Heart left ventricle (tissue), 16 donors: ENCODE measurements at regions of chr17 and their contacts with region 1.

Region 1: DNA sequence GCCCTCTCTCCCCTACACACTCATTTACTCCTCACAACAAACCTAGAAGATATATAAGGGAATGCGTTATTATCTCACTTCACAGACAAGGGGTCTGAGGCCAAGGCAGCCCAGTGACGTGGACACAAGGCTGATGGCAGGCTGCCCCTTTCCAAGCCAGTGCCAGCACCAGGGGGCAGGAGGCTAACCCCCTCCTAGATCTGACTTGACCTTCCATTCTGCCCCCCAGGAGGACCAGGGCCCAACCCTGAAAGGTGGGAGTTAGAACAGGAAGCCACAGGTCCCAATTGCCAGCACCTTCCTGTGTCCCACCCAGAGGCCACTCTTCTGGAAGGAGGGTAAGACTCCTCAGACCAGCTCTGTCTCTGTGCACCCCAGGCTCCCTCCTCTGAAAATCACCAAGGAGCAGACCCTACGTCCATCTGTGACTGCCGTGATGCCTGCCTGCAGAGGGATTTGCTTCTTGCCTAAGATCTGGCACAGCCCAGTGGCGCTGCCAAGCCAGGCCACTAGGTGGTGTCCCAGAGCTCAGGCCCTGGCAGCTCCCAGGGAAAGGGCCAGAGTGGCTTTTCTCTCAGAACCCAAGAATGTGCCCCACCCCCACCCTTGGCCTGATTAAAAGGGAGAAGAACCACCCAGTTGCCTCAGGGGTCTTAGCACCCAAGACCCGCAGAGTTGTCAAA is 42.4 kb upstream of the MRPS23 start:
- DNase-seq: peak; percentile 87 to 93 (median 91)
- ATAC-seq: peak; percentile 46 to 65 (median 47)
- H3K4me3 ChIP-seq: peak overlapping the region in 6 of 12 donors; percentile 48 to 56 (median 51)
- H3K27ac ChIP-seq: peak overlapping the region; percentile 92 to 100 (median 97)
- H3K4me1 ChIP-seq: peaks cover 6 to 90% (median 77%) of the 10 kb centered on the region in 12 donors
- H3K27me3 ChIP-seq: no peaks in the 10 kb centered on the region
- CTCF ChIP-seq: peak; percentile 95 to 100 (median 98)
- POLR2A ChIP-seq: no peak

Region 2: DNA sequence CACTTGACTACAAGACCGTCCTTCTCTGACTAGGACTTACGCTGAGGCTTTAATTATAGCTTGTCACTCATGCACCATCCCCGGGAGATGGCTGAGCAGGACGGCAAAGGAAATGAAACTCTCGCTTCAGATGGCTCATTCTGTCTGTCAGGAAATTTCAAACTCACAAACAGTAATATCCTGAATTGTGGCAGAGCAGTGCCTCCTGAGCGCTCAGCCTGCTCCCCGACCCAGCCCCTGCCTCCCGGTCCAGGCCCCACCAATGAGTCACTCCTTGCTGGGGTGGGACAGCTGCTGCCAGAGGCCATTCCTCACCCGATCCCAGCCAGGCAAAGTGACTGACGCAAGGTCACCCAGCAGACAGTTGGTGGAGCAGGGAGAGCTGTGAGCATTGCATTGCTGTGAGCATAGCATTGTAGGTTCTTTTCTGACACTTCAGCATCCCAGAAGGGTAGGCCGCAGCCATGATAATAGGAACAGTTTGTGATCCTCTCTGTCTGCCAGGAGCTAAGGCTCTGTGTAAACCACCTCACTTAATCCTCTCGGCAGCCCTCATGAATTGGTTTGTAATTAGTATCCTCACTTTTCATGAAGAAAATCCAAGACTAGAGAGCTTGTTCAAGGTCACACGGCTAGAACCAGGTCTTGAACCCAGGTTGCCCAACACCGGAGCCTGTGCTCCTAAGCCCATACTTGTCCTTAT is 168.1 kb before region 1 on chr17:
- intact Hi-C with region 1: no loop called
- DNase-seq: no peak
- ATAC-seq: no peak
- H3K4me3 ChIP-seq: no peak overlapping the region
- H3K27ac ChIP-seq: no peak overlapping the region
- H3K4me1 ChIP-seq: no peaks in the 10 kb centered on the region
- H3K27me3 ChIP-seq: no peaks in the 10 kb centered on the region
- CTCF ChIP-seq: no peak
- POLR2A ChIP-seq: no peak

Region 3: DNA sequence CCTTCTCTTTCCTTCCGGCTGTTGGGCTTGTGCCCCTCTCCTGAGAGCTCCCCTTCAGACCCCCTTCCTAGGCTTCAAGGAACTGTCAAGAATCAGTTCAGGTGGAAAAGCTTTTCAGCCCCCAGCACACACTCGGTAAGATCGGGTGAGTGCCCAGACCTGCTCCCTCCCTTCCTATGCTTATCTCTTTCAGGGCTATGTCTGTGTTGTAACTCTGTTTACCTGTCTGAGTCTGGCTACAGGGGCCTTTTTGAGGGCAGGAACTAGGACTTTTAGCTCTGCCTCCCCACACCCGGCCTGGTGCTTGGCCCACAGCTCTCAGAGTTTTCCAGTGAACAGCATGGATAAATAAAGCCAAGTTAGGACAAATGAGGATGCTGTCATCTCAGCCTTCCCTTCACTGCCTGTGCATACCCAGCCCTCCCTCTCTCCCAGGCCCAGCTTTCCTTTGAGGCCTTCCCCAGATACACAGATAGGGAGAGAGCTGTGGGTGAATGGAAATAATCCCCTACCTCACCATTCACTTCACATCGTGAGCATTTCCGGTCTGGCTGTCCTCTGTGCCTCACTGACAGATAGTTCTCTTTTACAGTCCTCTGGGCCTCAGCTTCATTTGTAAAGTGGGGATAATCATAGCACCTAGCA is 36.8 kb before region 1 on chr17:
- intact Hi-C with region 1: loop called in 7 of 10 experiments (anchors 1 to 5 kb)
- DNase-seq: no peak
- ATAC-seq: no peak
- H3K4me3 ChIP-seq: no peak overlapping the region
- H3K27ac ChIP-seq: peak overlapping the region in 7 of 12 donors; percentile 32 to 97 (median 92)
- H3K4me1 ChIP-seq: peaks cover 0 to 57% (median 34%) of the 10 kb centered on the region in 12 donors
- H3K27me3 ChIP-seq: no peaks in the 10 kb centered on the region
- CTCF ChIP-seq: no peak
- POLR2A ChIP-seq: no peak

Region 4: DNA sequence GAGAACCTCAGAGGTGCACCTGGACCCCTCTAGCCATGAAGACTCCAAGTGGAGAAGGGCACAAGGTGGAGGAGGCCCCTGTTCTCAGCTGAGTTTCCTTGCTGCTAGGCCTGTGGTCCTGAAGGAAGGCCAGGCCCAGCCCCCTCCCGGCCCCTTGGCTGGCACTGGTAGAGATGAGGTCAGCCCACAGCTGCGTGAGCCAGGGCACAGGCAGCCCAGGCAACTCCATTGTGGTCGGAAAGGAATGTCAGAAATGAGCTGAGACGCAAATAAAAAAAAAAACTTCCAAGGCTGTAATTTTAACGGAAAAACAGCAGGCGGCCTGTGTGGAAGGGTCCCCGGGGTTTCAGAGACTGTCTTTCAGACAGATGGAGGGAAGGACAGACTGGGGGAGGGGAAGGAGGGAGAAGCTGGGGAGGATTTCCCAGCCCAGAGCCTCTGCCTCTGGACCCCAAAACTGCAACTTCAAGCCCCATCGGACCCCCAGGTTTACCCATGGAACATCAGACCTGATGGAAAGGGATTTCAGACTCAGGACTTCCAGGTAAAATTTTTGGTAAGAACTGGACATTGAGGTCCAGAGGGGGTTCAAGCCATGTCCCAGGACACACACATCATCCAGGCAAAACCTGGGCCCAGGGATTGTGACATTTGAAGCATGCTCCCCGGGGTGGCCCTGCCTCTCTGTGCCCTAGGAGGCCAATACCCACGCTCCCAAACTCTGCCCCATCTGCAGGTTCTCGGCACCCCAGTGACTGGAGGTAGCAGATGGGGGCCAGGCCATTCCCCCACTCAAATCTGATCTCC is 16.8 kb before region 1 on chr17:
- intact Hi-C with region 1: loop called in 2 of 10 experiments (anchors 1 to 2 kb)
- DNase-seq: peak; percentile 84 to 89 (median 87)
- ATAC-seq: peak; percentile 82 to 90 (median 88)
- H3K4me3 ChIP-seq: peak overlapping the region in 5 of 12 donors; percentile 6 to 39 (median 29)
- H3K27ac ChIP-seq: peak overlapping the region; percentile 56 to 93 (median 86)
- H3K4me1 ChIP-seq: peaks cover 15 to 78% (median 54%) of the 10 kb centered on the region in 12 donors
- H3K27me3 ChIP-seq: no peaks in the 10 kb centered on the region
- CTCF ChIP-seq: peak; percentile 12 to 58 (median 40)
- POLR2A ChIP-seq: no peak

Region 5: DNA sequence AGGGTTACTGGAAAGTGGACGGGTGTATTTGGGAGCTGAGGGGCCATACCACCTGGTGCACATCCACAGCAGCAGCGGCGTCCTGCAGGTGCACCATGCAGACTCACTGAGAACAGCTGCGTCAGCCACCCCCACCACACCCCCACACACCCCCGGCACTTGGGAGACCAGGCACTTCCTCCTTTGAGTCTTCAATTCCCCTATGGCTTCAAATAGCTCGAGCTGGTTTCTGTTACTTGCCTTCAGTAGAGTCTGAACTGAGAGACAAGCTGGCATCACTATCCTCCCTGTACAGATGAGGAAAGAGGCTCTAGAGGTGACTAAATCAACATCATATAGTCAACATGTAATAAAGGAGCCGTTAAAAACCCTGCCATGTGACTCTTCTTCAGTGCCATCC is 47.5 kb after region 1 on chr17:
- intact Hi-C with region 1: loop called in 1 of 10 experiments (anchors 5 kb)
- DNase-seq: peak in 2 of 5 donors; percentile 47 to 64
- ATAC-seq: peak in 1 of 4 donors; percentile 5
- H3K4me3 ChIP-seq: no peak overlapping the region
- H3K27ac ChIP-seq: peak overlapping the region in 11 of 12 donors; percentile 44 to 100 (median 70)
- H3K4me1 ChIP-seq: peaks cover 34 to 99% (median 89%) of the 10 kb centered on the region in 12 donors
- H3K27me3 ChIP-seq: no peaks in the 10 kb centered on the region
- CTCF ChIP-seq: no peak
- POLR2A ChIP-seq: no peak

Region 6: DNA sequence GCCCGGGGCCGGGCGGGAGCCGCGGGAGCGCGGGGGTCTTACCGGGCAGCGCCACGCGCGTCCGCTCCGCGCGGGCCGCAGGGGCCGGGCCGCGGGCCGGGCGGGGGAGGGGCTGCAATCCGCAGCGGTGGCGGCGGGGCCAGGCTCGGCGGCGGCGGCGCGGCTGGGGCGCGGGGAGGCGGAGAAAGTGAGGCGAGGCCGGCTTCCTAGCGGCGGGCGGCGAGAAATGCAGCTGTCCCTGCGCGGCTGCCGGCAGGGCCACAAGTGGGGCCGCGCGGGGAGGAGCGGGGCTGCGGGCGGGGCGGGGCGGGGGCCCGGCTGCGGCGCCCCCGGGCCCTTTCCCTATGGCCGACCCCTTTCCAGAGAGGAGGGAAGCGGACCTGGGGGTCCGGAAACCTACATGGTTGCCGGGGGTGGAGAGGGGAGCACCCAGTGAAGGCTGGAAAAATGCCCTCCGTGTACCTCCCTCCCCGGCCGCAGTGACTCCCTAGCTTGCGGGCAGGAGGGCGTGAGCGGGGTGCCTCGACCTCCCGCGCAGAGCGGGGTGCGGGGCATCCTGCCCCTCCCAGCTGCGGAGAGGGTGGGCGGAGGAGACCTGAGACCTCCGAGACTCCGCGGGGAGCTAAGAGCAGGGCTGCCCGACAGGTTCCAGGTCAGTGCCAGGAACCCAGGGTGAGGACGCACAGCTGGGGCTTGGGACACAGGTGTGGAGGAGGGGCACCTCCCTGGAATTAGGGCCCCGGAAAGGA is 63.1 kb after region 1 on chr17 and contains the start of gene CUEDC1:
- intact Hi-C with region 1: loop called in 9 of 10 experiments (anchors 1 to 5 kb)
- DNase-seq: peak; percentile 87 to 94 (median 89)
- ATAC-seq: peak; percentile 12 to 78 (median 72)
- H3K4me3 ChIP-seq: peak within 1 kb of the TSS; percentile 64 to 99 (median 92)
- H3K27ac ChIP-seq: peak within 1 kb of the TSS; percentile 94 to 100 (median 100)
- H3K4me1 ChIP-seq: peaks cover 0 to 58% (median 43%) of the 10 kb centered on the region in 12 donors
- H3K27me3 ChIP-seq: peaks cover 0 to 4% (median 0%) of the 10 kb centered on the region in 9 donors
- CTCF ChIP-seq: peak in 10 of 12 donors; percentile 21 to 63 (median 44)
- POLR2A ChIP-seq: peak in 1 of 2 donors; percentile 34
- total RNA-seq, gene CUEDC1: 37.6 to 68.5 (median 42.8) TPM

Region 7: DNA sequence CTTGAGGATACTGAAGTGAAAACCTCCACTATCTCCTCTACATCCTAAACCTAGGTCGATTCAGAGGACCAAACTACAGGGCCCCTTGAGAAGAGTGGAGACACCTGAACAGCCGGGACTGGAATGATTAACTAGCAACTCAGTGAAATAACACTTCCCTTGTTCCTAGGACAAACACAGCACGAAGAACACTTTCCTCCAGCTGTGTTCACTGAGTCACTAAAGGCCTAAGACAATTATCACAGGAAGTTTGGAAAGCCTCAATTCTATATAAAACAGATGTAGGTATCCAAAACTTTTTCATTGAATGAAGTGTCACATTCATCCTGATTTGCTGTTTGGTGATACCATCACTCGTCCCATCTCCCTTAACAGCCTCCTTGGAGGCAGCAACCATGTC is 78.4 kb after region 1 on chr17:
- intact Hi-C with region 1: no loop called
- DNase-seq: no peak
- ATAC-seq: no peak
- H3K4me3 ChIP-seq: no peak overlapping the region
- H3K27ac ChIP-seq: peak overlapping the region in 1 of 12 donors; percentile 7
- H3K4me1 ChIP-seq: peaks cover 0 to 43% (median 24%) of the 10 kb centered on the region in 12 donors
- H3K27me3 ChIP-seq: no peaks in the 10 kb centered on the region
- CTCF ChIP-seq: no peak
- POLR2A ChIP-seq: no peak

Region 8: GRCh38 chr17:57995076-57995956 is 103.0 kb after region 1 on chr17:
- intact Hi-C with region 1: loop called in 2 of 10 experiments (anchors 2 kb)
- DNase-seq: peak in 4 of 5 donors; percentile 67 to 71 (median 69)
- ATAC-seq: peak; percentile 88 to 94 (median 91)
- H3K4me3 ChIP-seq: no peak overlapping the region
- H3K27ac ChIP-seq: peak overlapping the region in 11 of 12 donors; percentile 5 to 98 (median 54)
- H3K4me1 ChIP-seq: peaks cover 0 to 53% (median 25%) of the 10 kb centered on the region in 12 donors
- H3K27me3 ChIP-seq: no peaks in the 10 kb centered on the region
- CTCF ChIP-seq: peak; percentile 46 to 72 (median 68)
- POLR2A ChIP-seq: no peak

Region 9: GRCh38 chr17:58242171-58242784 is 350.0 kb after region 1 on chr17:
- intact Hi-C with region 1: no loop called
- DNase-seq: no peak
- ATAC-seq: no peak
- H3K4me3 ChIP-seq: no peak overlapping the region
- H3K27ac ChIP-seq: no peak overlapping the region
- H3K4me1 ChIP-seq: no peaks in the 10 kb centered on the region
- H3K27me3 ChIP-seq: peaks cover 0 to 70% (median 23%) of the 10 kb centered on the region in 9 donors
- CTCF ChIP-seq: no peak
- POLR2A ChIP-seq: no peak